Left cardiac atrium (tissue), 4 donors: ENCODE measurements at regions of chr17 and their contacts with region 1.

Region 1: GRCh38 chr17:50547035-50547735 is at the start of gene SPATA20:
- DNase-seq: peak; percentile 93
- ATAC-seq: peak; percentile 90
- total RNA-seq, gene SPATA20: 41.0 to 41.1 TPM

Region 2: GRCh38 chr17:50507871-50508572 is 39.2 kb before region 1 on chr17 and contains the start of gene MYCBPAP:
- intact Hi-C with region 1: no loop called
- DNase-seq: peak; percentile 91
- ATAC-seq: peak; percentile 92 to 94
- total RNA-seq, gene MYCBPAP: 0.39 to 0.59 TPM

Region 3: GRCh38 chr17:50613007-50613992 is 66.1 kb after region 1 on chr17:
- intact Hi-C with region 1: loop called in 1 of 2 experiments (anchors 5 kb)
- DNase-seq: no peak
- ATAC-seq: peak in 1 of 2 donors; percentile 27

Region 4: GRCh38 chr17:50626037-50626574 is 78.9 kb after region 1 on chr17:
- intact Hi-C with region 1: loop called (anchors 1 to 5 kb)
- DNase-seq: peak; percentile 81
- ATAC-seq: peak; percentile 77 to 86

Region 5: DNA sequence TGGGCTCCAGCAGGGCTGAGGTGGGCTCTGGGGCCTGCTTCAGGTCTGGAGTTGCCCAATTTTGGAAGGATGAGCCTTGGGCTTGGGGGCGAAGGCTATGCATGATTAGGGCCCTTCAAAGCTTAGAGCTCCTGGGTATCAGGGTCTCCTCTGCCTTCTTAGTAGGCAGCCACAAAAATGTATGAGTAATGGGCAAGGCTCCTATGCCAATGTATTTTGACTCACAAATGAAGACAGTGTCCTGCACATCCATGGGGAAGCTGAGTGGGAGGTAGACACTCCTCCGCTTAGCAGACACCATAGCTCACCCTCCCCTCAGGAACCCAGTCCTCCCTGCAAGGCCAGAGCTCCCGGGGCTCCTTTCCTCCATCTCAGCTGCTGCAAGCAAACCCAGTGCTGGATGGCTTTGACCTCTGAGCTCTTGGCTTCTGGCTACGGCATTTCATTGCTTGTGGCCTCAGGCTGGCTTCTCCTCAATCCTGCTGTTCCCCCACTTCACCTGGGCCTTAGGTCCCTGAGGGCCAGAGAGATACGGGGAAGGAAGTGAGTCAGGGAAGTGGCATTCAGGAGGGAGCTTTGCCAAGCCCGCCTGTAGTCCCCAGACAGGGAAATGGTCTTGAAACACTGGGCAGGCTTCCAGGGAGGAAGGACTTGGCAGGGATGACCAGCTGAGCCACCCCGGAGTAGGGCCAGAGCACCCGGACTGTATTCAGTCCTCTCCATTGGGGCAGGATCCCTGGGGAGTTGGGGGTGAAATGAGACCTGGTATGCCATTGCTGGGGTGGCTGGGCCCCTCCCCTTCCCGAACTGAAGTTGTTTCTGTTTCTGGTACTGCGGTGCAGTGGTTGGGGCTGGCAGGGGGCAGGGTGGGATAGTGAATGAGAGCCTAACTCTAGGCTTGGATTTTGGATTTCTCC is 91.9 kb after region 1 on chr17:
- intact Hi-C with region 1: no loop called
- DNase-seq: peak; percentile 95
- ATAC-seq: peak; percentile 83

Region 6: DNA sequence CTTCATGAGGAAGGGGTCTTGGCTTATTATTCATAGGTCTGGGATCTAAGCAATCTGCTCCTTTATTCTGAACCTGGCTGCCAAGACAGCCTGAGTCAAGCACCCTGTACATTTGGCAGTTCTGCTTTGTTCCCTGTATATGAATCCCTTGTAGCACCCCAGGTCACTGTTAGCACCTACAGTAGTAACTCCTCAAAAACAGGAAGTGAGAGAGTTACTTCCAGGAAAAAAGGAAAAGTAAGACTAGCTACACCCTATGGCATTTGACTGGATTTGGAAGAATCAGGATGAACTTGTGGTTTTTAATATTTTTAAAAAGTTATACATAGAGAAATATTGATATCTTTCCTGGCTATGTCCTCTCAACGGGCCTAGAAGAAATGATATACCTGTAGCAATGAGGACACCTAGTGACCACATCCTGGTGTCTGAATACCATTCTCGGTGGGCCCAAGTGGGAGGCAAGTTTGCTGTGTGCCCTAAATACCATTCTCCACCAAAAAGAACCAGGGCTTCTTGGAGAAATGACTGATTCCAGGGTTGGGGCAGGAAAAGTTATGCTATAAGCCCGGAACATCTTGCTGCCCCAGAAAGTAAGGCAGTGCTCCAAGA is 150.6 kb after region 1 on chr17:
- intact Hi-C with region 1: loop called in 1 of 2 experiments (anchors 5 kb)
- DNase-seq: no peak
- ATAC-seq: no peak

Region 7: GRCh38 chr17:50949989-50950881 is 403.1 kb after region 1 on chr17:
- intact Hi-C with region 1: loop called in 1 of 2 experiments (anchors 10 kb)
- DNase-seq: peak; percentile 82
- ATAC-seq: peak; percentile 79 to 81